ENCODE measurements at regions of chr14 and their contacts with region 1.

Region 1: DNA sequence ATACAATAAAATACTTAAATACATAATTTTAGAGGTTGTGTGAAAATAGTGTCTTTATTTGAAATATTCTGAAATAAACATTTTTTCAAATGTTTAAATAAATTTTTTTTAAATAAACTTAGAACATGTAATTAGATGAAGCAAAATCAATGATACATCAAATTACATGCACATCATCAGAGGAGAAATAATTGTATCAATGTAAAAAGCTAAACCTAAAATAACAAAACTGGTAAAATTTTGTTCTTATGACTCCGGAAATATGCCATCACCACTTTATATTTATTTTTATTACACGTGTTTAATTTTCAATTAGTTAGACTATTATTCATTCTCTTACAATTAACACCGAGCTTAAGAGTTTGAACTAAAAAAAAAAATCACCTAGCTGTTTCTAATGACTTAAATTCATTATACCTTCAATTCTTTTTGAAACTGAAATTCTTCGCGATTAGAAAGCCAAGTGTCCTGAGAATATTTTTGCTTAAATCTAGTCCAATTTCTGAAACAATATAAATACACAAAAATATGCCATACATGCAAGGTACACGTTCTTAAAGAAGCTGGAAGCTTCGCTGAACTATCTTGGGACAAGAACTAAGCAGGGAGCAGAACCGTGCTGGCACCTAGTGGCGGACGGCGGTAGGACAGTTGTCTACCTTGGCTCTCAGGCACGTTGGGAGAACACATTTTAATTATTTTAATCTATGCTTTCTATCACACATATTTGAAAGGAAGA is 230.5 kb downstream of the SLC25A21 start:
- DNase-seq: no peak
- H3K4me3 ChIP-seq: no peak overlapping the region
- CTCF ChIP-seq: peak; percentile 93

Region 2: GRCh38 chr14:36553656-36554260 is 388.2 kb before region 1 on chr14:
- CTCF ChIA-PET with region 1: interaction called, 15 read pairs
- POLR2A ChIA-PET with region 1: no interaction called
- DNase-seq: peak; percentile 2
- H3K4me3 ChIP-seq: no peak overlapping the region
- CTCF ChIP-seq: peak; percentile 61

Region 3: GRCh38 chr14:36647824-36648753 is 293.9 kb before region 1 on chr14:
- CTCF ChIA-PET with region 1: interaction called, 43 read pairs
- POLR2A ChIA-PET with region 1: no interaction called
- DNase-seq: no peak
- H3K4me3 ChIP-seq: peak overlapping the region; percentile 52
- CTCF ChIP-seq: peak; percentile 60

Region 4: GRCh38 chr14:36931796-36932195 is 10.2 kb before region 1 on chr14:
- CTCF ChIA-PET with region 1: interaction called, 19 read pairs
- POLR2A ChIA-PET with region 1: no interaction called
- DNase-seq: no peak
- H3K4me3 ChIP-seq: no peak overlapping the region
- CTCF ChIP-seq: no peak

Region 5: GRCh38 chr14:36952717-36953116 is 10.8 kb after region 1 on chr14:
- CTCF ChIA-PET with region 1: interaction called, 47 read pairs
- POLR2A ChIA-PET with region 1: no interaction called
- DNase-seq: no peak
- H3K4me3 ChIP-seq: no peak overlapping the region
- CTCF ChIP-seq: no peak

Region 6: DNA sequence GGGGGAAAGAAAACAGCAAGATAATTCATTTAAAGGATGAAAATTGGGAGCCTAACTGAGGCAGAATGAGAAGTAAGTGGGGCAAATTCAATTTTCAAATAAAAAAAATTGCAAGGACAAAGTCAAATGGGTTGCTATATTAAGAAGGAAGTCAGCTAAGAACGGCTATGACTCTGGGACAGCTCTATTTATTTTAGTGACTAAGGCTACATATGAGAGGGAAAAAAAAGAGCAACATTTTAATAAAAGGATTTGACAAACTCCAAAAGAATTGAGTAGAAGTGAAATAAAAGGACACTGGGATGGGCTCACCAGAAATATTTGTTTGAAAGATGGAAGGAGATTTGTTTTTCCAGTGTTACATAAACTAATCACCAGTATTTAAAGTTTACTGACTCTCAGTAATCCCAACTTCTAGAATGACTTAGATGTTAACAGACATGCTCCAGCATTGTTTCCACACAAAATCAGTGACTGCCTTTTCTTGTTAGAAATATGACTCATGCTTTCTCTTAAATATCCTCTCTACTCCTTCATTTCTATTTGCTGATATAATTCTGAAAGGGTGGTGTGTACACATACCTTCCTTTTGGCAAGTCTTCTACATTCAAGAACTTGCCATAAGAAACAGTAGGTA is 32.0 kb after region 1 on chr14:
- CTCF ChIA-PET with region 1: interaction called, 10 read pairs
- POLR2A ChIA-PET with region 1: no interaction called
- DNase-seq: no peak
- H3K4me3 ChIP-seq: no peak overlapping the region
- CTCF ChIP-seq: no peak

Region 7: DNA sequence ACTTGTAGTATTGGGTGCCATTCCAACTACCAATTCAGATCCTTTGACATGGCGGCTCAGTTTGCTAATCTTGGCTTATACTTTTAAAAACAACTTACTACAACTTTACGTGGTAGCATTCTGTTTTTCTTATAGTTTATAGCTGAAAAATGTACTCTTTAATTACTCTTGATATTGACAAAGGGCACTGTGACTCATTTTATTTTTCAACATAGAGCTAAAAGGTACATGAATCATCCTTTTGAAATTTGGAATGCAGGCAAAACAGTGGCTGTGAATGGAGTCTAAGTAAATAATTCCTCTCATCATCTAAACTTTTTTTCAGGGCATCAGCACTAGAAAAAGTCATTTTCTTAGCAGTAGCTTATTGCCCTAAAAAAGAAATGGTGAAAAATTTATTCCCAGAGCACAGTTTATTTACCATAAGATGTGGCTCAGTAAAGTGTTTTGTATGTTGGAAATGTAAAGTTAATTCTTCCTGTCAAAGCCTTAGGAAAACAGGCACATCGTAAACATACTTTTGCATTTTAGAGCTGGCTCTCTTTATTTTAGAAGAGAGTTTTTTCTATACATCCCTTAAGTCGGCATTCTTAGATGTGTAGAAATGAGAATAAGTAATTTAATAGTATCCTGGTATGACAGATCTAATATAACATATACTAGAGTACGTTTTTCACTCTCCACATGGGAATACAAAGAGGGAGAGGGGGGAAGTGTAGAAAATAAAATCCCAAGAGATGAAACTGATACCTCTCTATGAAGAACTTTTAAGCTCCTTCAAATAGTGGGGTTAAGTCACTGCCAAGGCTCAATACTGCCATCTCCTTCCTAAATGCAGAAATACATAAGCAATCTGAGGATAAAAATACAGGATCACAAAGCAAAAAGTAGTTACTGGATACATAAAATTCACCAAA is 175.2 kb after region 1 on chr14:
- CTCF ChIA-PET with region 1: interaction called, 34 read pairs
- POLR2A ChIA-PET with region 1: no interaction called
- DNase-seq: no peak
- H3K4me3 ChIP-seq: no peak overlapping the region
- CTCF ChIP-seq: peak; percentile 55

Region 8: GRCh38 chr14:37131205-37131604 is 189.3 kb after region 1 on chr14:
- CTCF ChIA-PET with region 1: no interaction called
- POLR2A ChIA-PET with region 1: no interaction called
- DNase-seq: no peak
- H3K4me3 ChIP-seq: no peak overlapping the region
- CTCF ChIP-seq: no peak

Measured in AG04449 (cell line).